Dendritic cell treated with granulocyte-macrophage colony-stimulating factor and Interleukin-4, amounts not matched to agents 40 ng/mL and 50 ng/mL, for 4 days (primary cell): ENCODE measurements at regions of chr4 and their contacts with region 1.

Region 1: DNA sequence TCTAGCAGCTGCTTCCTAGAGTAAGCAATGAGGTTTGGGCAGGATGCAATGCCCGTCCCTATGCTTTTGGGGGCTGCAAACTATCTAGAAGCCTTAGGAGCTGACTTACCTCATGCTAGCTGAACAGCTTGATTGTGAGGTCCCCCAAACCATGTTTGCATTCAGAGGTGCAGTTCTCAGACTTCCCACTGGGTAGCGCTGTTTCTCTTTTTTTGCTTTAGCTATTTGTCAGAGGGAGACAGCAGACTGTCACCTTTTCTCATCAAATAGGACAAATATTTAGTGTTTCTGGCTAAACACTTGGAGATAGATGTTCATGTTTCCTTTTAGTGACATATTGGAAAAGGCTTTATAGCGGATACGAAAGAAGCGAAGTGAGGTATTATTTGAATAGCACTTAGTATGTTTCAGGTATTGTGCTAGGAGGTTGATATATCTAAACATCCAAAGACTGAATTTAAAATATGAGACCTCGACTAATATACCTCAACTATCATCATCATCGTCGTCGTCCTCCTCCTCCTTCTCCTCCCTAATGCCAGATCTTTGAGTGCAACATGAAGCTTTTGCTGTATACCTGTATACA is 18.7 kb upstream of the TMEM192 start:
- H3K4me3 Mint-ChIP-seq: no peak overlapping the region
- H3K27ac Mint-ChIP-seq: no peak overlapping the region
- H3K4me1 Mint-ChIP-seq: peaks cover 25% of the 10 kb centered on the region
- H3K27me3 Mint-ChIP-seq: no peaks in the 10 kb centered on the region

Region 2: DNA sequence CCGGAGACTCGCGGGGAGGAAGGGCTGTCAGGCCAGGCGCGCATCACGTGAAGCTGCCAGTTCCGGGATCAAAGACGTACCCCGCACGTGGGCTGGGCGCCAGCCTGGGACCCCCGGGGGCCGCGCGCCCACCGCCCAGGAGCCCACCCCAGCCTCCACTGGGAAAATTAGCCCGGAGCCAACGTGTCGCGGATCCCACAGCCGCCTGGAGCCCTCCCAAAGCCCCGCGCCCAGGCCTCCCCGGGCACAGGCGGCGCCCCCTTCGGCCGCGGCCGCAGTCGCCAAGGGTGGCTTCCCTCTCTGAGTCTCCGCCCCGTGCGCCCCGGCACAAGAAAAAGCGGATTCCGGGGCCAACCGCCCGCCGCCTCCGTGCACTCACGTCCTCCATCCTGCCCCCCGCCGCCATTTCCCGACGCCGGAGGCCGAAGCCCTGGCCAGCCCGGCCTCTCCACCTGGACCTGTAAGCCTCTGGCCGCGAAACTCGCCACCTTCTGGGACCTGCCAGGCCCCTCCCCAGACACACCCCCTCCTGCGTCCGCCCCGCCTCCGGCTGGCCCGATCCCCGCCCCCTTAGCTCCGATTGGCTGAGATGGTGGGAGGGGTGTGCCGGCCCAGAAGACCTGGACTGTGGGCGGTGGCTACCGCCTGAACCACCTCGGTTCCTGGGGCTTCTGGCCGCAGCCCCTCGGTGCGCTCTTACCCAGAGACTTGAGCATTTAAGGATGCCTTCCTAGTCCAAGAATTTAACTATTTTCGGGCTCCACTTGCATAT is 18.8 kb before region 1 on chr4 and contains the start of gene TMEM192:
- intact Hi-C with region 1: loop called (anchors 2 kb)
- H3K4me3 Mint-ChIP-seq: peak within 1 kb of the TSS; percentile 99
- H3K27ac Mint-ChIP-seq: peak within 1 kb of the TSS; percentile 95
- H3K4me1 Mint-ChIP-seq: peaks cover 8% of the 10 kb centered on the region
- H3K27me3 Mint-ChIP-seq: peaks cover 13% of the 10 kb centered on the region

Region 3: GRCh38 chr4:165207431-165208220 is 76.3 kb after region 1 on chr4 and contains the start of gene KLHL2:
- intact Hi-C with region 1: loop called (anchors 5 kb)
- H3K4me3 Mint-ChIP-seq: peak within 1 kb of the TSS; percentile 79
- H3K27ac Mint-ChIP-seq: peak within 1 kb of the TSS; percentile 69
- H3K4me1 Mint-ChIP-seq: peaks cover 61% of the 10 kb centered on the region
- H3K27me3 Mint-ChIP-seq: no peaks in the 10 kb centered on the region

Region 4: DNA sequence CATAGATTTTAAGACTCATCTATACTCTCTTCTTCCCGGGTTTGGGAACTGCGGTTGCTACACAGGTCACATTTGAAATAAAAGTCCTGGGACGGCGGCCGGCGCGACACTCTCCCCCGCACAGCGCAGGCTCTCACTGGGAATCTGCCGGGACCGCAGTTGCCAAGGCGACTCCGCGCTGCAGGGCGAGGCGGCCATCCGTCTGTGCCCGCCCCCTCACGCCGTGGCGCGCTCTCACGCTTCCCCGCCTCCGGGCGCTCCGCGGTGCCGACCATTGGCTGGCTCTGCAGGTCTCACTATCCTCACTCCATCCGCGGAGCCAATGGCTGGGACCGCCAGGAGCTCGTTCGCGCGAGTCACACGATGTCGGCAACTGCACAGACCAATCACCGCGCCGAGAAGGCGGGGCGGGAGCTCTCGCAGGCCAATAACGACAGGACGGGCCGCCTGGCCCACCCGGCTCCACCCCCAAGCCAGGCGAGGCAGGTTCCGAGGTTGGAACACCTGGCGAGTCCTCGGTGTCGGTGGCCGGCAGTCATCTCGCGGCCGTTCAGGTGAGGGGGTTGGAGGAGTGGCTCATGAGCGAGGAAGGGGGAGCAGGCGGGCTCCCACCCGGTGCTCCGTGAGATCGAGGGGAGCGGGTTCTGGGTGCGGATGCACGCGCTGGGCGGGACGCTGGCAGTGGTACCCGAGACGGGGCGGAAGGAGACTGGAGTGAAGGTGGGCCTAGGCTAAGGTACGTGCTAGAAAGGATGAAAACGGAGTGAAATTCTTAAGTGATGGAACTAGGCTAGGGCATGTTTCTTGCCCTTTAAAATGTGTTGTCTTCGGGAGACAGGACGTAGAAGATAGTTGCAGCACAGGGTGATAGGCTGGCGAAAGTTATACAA is 196.1 kb after region 1 on chr4 and contains the start of gene MSMO1:
- intact Hi-C with region 1: loop called (anchors 5 kb)
- H3K4me3 Mint-ChIP-seq: no peak within 1 kb of the TSS
- H3K27ac Mint-ChIP-seq: no peak within 1 kb of the TSS
- H3K4me1 Mint-ChIP-seq: peaks cover 44% of the 10 kb centered on the region
- H3K27me3 Mint-ChIP-seq: no peaks in the 10 kb centered on the region

Region 5: GRCh38 chr4:165343353-165344191 is 212.2 kb after region 1 on chr4:
- intact Hi-C with region 1: loop called (anchors 5 kb)
- H3K4me3 Mint-ChIP-seq: no peak overlapping the region
- H3K27ac Mint-ChIP-seq: no peak overlapping the region
- H3K4me1 Mint-ChIP-seq: no peaks in the 10 kb centered on the region
- H3K27me3 Mint-ChIP-seq: no peaks in the 10 kb centered on the region

Region 6: GRCh38 chr4:165464813-165465381 is 333.6 kb after region 1 on chr4:
- intact Hi-C with region 1: loop called (anchors 1 kb)
- H3K4me3 Mint-ChIP-seq: no peak overlapping the region
- H3K27ac Mint-ChIP-seq: no peak overlapping the region
- H3K4me1 Mint-ChIP-seq: no peaks in the 10 kb centered on the region
- H3K27me3 Mint-ChIP-seq: no peaks in the 10 kb centered on the region